ENCODE measurements at regions of chr9 and their contacts with region 1.

Region 1: DNA sequence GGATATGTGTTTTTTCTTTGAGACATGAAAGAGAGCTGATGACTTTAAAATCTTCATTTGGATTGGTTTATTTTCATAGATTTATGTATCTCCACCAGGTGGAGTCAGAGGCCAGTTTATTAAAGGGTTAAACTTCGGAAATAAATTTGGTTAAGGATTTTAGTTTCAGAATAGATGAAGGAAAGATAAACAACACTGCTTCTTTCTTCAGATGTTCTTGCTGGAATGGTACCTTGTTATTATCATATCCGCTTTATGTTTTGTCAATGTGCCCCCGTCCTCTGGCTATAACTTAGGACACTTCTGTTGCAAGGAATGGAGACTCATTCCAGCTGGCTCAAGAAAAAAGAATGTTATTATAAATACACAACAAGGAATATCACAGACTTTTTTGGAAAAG is 81.2 kb downstream of the ALDH1A1 start:
- DNase-seq: no peak
- H3K4me3 ChIP-seq: no peak overlapping the region
- H3K27ac ChIP-seq: peak overlapping the region in 1 of 2 donors; percentile 1
- H3K4me1 ChIP-seq: peaks cover 23% of the 10 kb centered on the region
- H3K27me3 ChIP-seq: no peaks in the 10 kb centered on the region
- CTCF ChIP-seq: peak; percentile 29 to 41 (median 38)
- POLR2A ChIP-seq: no peak

Region 2: DNA sequence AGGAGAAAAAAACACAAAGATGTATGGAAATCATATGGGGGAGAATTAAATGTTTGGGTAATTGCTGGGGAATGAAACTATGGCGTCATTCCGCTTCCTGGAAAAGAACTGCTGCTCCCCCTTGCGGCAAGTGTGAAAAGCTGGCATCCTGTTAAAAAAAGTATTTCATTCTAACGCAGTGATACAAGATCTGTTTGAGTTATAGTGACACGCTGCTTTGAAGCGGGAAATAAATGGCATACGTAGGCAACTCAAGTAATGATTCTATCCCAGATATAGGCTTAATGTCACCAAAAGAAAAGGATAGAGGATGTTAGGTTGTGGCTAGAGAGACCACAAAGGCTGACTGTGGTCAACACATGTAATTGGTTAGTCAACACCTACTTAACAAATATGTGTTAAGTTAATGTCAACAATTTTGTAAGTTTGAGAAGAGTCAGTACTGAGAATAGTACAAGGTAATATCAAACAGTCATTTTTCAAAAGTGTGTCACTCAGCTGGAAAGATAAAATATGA is 151.4 kb after region 1 on chr9:
- intact Hi-C with region 1: loop called (anchors 10 kb)
- DNase-seq: peak; percentile 63
- H3K4me3 ChIP-seq: no peak overlapping the region
- H3K27ac ChIP-seq: peak overlapping the region in 1 of 2 donors; percentile 34
- H3K4me1 ChIP-seq: peaks cover 7% of the 10 kb centered on the region
- H3K27me3 ChIP-seq: no peaks in the 10 kb centered on the region
- CTCF ChIP-seq: peak; percentile 81 to 93 (median 83)
- POLR2A ChIP-seq: no peak

Measured in testis (tissue), 5 donors.